ENCODE measurements at regions of chr10 and their contacts with region 1.

Region 1: GRCh38 chr10:16030562-16030961 is 170.3 kb upstream of the MINDY3 start:
- DNase-seq: no peak
- H3K4me3 ChIP-seq: no peak overlapping the region
- H3K27ac ChIP-seq: no peak overlapping the region
- H3K4me1 ChIP-seq: no peaks in the 10 kb centered on the region
- H3K27me3 ChIP-seq: no peaks in the 10 kb centered on the region
- CTCF ChIP-seq: no peak
- POLR2A ChIP-seq: no peak

Region 2: GRCh38 chr10:15960277-15960676 is 70.3 kb before region 1 on chr10:
- intact Hi-C with region 1: loop called (anchors 2 kb)
- DNase-seq: no peak
- H3K4me3 ChIP-seq: no peak overlapping the region
- H3K27ac ChIP-seq: no peak overlapping the region
- H3K4me1 ChIP-seq: no peaks in the 10 kb centered on the region
- H3K27me3 ChIP-seq: no peaks in the 10 kb centered on the region
- CTCF ChIP-seq: no peak
- POLR2A ChIP-seq: no peak

Region 3: DNA sequence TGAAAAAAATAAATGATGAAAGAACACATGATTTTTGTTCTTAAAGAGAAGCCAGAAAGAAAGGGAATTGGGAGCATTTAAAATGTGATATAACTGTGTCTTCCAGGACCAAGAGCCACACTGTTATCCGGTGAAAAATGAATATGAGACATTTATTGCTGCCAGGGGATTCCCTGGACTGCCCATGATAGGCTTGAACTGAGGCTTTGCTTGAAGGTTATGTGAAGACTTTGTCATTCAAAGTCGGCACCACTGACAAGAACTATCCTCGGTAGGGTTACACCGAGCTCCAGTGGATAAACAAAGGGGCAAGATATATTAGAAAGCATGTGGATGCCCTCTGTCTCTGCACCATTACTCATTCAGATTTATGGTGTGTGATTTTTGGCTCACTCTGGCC is 44.9 kb before region 1 on chr10:
- intact Hi-C with region 1: loop called (anchors 2 kb)
- DNase-seq: no peak
- H3K4me3 ChIP-seq: no peak overlapping the region
- H3K27ac ChIP-seq: no peak overlapping the region
- H3K4me1 ChIP-seq: no peaks in the 10 kb centered on the region
- H3K27me3 ChIP-seq: no peaks in the 10 kb centered on the region
- CTCF ChIP-seq: no peak
- POLR2A ChIP-seq: no peak

Measured in breast epithelium (tissue), 4 donors.